Testis (tissue), 5 donors: ENCODE measurements at regions of chr14 and their contacts with region 1.

Region 1: DNA sequence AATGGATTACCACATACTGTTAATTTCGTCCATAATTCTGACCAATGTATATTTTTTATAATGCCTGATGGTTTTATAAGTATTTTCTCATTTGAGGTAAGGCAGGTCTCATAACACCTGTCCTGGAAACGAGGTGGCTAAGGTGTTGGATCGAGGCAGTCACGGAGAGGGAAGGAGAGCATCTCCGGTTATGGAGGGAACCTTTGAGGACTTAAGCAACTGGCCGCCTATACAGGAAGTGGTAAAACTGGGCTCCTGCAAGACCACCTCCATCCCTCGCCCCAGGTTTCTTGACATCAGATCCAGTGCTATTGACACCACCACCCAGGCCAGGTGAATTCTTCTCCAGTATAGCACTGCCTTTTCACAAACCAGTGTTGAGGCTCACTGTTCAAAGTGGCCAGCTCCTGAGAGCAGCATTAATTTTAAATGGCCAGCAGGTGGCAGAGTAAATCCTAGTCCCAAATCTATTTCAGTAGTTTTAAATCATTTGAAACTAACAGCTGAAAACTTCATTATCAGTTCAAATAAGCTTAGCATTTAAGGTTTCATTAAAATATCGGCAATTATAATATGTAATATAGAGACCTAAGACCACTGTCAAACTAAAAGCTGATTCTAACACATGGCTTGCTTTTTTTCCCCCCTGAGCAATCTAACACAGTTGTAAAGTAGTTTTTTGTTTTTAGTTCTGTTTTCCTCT is 100.8 kb downstream of the PPM1A start:
- DNase-seq: peak; percentile 48
- H3K4me3 ChIP-seq: no peak overlapping the region
- H3K27ac ChIP-seq: no peak overlapping the region
- H3K4me1 ChIP-seq: peaks cover 6% of the 10 kb centered on the region
- H3K27me3 ChIP-seq: no peaks in the 10 kb centered on the region
- CTCF ChIP-seq: peak; percentile 43 to 73 (median 73)
- POLR2A ChIP-seq: no peak

Region 2: DNA sequence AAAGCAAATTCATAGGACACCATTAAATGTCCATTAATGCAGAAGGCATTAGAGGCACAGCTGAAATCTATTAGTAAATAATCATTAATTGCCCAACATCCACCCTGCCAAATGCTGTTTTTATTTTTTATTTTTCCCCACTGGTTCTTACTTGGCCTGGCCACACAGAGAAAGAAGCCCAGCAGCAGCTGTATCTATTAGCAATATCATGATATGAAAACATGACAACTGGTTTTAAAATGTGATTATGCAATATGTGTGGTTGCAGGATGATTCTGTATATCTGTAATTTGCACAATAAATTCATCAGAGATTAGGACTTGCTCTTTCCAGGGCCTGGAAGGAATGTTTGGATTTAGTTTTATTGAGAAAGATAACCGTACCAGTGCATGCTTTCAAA is 204.0 kb after region 1 on chr14:
- intact Hi-C with region 1: loop called (anchors 10 kb)
- DNase-seq: no peak
- H3K4me3 ChIP-seq: no peak overlapping the region
- H3K27ac ChIP-seq: no peak overlapping the region
- H3K4me1 ChIP-seq: no peaks in the 10 kb centered on the region
- H3K27me3 ChIP-seq: no peaks in the 10 kb centered on the region
- CTCF ChIP-seq: no peak
- POLR2A ChIP-seq: no peak